ENCODE measurements at regions of chr3 and their contacts with region 1.

Region 1: GRCh38 chr3:101588616-101589015 is 14.6 kb downstream of the PCNP start:
- DNase-seq: no peak
- H3K4me3 ChIP-seq: no peak overlapping the region
- H3K27ac ChIP-seq: no peak overlapping the region
- H3K4me1 ChIP-seq: peaks cover 0 to 19% (median 3%) of the 10 kb centered on the region in 6 donors
- H3K27me3 ChIP-seq: no peaks in the 10 kb centered on the region
- CTCF ChIP-seq: no peak
- POLR2A ChIP-seq: no peak

Region 2: DNA sequence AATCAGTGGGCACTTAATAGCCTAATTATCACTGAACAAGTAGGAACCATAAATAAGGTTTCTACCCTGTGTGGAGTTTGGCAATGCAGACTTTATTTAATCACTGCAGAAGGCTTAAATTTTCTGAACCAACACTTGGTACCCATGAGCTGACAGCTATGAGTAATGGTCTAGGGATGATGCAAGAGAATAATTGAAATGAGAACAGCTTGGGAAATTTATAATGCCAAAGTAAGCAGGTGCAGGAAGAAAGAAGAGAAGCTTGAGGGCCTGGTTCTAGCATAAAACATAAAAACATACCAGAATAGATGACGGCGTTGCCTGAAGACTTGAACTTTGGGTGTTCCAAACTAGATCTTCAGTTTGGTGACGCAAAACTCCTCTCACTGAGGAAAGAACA is 335.2 kb before region 1 on chr3:
- intact Hi-C with region 1: no loop called
- DNase-seq: no peak
- H3K4me3 ChIP-seq: no peak overlapping the region
- H3K27ac ChIP-seq: no peak overlapping the region
- H3K4me1 ChIP-seq: peaks cover 0 to 7% (median 0%) of the 10 kb centered on the region in 6 donors
- H3K27me3 ChIP-seq: no peaks in the 10 kb centered on the region
- CTCF ChIP-seq: no peak
- POLR2A ChIP-seq: no peak

Region 3: GRCh38 chr3:101635954-101636798 is 47.6 kb after region 1 on chr3:
- intact Hi-C with region 1: loop called (anchors 10 kb)
- DNase-seq: peak; percentile 84
- H3K4me3 ChIP-seq: no peak overlapping the region
- H3K27ac ChIP-seq: no peak overlapping the region
- H3K4me1 ChIP-seq: peaks cover 0 to 6% (median 0%) of the 10 kb centered on the region in 6 donors
- H3K27me3 ChIP-seq: no peaks in the 10 kb centered on the region
- CTCF ChIP-seq: peak; percentile 5 to 73 (median 62)
- POLR2A ChIP-seq: no peak

Measured in spleen (tissue), 13 donors.